K562 (cell line): ENCODE measurements at regions of chr19 and their contacts with region 1.

Region 1: DNA sequence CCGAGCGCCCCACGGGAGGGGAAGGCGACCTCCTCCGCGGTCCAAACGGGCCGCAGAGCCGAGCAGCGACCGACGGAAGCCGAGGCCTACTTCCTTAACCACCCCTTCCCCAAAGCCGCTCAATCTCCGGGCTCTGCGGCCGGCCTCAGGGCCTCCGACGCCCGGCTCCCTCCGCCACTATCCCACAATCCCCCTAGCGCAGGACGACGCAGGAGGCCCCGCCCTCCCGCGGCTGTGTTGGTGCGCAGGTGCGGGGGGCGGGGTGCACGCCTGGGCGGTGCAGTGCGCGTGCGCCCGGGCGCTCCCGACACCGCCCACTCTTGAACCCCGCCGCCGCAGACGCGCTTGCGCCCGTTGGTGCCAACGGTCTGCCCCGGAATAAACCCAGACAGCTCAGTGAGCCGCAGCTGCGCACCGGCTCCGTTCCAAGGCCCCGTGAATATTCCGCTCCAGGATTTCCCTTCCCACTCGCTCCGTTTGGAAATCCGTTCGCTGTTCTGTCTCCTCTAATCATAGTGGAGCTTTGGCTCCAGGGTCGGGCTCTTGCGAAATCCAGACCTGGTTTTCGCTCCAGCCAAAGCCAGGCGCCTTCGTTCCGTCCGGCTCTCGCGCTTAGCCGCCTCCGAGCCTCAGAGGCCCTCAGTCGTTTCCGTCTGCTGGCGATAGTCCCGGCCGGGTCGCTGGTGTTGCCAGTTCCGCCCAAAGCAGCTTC is at the start of gene PPP6R1:
- DNase-seq: peak; percentile 97 to 99 (median 98)
- ATAC-seq: peak; percentile 90
- H3K4me3 ChIP-seq: peak within 1 kb of the TSS; percentile 94
- H3K27ac ChIP-seq: peak within 1 kb of the TSS; percentile 97
- H3K4me1 ChIP-seq: peaks cover 34 to 53% of the 10 kb centered on the region in 2 experiments; a peak in 4 of 5 replicates
- H3K27me3 ChIP-seq: no peaks in the 10 kb centered on the region
- CTCF ChIP-seq: no peak
- EP300 ChIP-seq: peak; percentile 86
- POLR2A ChIP-seq: peak; percentile 92
- RAD21 ChIP-seq: peak; percentile 53 to 57
- polyA plus RNA-seq, gene PPP6R1: 0.48 to 0.89 TPM

Region 2: GRCh38 chr19:54952591-54953344 is 306.2 kb before region 1 on chr19:
- CTCF ChIA-PET with region 1: no interaction called
- POLR2A ChIA-PET with region 1: no interaction called
- in situ Hi-C with region 1: no loop called
- intact Hi-C with region 1: no loop called
- DNase-seq: peak in 1 of 4 experiments; percentile 42
- ATAC-seq: peak; percentile 45; the same call in 2 of the 3 replicates
- H3K4me3 ChIP-seq: no peak overlapping the region
- H3K27ac ChIP-seq: no peak overlapping the region
- H3K4me1 ChIP-seq: peaks cover 8 to 9% of the 10 kb centered on the region in 2 experiments; a peak in 4 of 5 replicates
- H3K27me3 ChIP-seq: peaks cover 6 to 15% of the 10 kb centered on the region in 2 experiments; a peak in 3 of 5 replicates
- CTCF ChIP-seq: no peak
- EP300 ChIP-seq: no peak
- POLR2A ChIP-seq: no peak
- RAD21 ChIP-seq: no peak

Region 3: DNA sequence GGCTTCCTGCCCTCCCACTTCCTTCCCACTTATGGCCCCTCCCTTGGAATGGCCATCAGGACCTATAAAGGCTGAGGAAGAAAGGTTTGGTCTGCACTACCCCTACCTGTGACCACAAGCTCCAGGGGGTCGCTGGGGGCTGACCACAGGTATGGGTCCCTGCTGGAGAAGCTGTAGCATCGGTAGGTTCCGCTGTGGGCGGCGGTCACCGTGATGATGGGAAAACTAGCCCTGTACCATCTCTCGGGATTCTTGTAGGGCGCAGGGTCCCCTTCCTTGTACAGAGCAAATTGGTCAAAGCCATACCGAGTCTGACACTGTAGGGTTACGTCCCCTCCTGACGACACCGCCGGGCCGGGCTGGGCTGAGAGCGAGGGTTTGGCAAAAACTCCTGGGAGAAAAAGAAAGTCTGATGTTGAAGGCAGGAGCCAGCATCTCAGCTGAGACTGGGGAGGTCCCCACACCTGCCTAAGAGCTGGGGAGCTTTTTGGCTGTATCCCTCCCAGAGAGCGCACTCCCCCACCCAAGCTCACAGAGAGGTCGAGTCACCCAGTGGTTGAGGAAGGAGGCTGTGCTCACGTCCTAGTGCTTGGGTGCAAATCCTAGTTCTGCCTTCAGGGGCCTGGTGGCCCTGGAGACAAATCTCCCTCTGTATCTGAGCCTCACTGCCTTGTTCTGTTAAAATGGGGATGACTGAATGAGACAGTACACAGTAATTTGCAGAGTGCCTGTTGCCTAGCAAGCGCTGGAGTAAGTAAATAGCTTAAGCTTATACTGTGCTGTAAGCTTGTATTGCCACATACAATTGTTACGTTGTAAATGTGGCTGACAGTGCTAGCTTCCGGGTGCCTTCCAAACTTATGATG is 231.3 kb before region 1 on chr19:
- CTCF ChIA-PET with region 1: no interaction called
- POLR2A ChIA-PET with region 1: no interaction called
- in situ Hi-C with region 1: no loop called
- intact Hi-C with region 1: no loop called
- DNase-seq: peak; percentile 61 to 79 (median 64)
- ATAC-seq: peak; percentile 88
- H3K4me3 ChIP-seq: peak overlapping the region; percentile 51
- H3K27ac ChIP-seq: peak overlapping the region; percentile 79
- H3K4me1 ChIP-seq: peaks cover 2 to 19% of the 10 kb centered on the region in 2 experiments; a peak in 3 of 5 replicates
- H3K27me3 ChIP-seq: no peaks in the 10 kb centered on the region
- CTCF ChIP-seq: peak; percentile 38 to 59 (median 51)
- EP300 ChIP-seq: no peak
- POLR2A ChIP-seq: peak; percentile 93
- RAD21 ChIP-seq: peak in 1 of 2 experiments; percentile 6; a peak in 1 of 4 replicates

Region 4: DNA sequence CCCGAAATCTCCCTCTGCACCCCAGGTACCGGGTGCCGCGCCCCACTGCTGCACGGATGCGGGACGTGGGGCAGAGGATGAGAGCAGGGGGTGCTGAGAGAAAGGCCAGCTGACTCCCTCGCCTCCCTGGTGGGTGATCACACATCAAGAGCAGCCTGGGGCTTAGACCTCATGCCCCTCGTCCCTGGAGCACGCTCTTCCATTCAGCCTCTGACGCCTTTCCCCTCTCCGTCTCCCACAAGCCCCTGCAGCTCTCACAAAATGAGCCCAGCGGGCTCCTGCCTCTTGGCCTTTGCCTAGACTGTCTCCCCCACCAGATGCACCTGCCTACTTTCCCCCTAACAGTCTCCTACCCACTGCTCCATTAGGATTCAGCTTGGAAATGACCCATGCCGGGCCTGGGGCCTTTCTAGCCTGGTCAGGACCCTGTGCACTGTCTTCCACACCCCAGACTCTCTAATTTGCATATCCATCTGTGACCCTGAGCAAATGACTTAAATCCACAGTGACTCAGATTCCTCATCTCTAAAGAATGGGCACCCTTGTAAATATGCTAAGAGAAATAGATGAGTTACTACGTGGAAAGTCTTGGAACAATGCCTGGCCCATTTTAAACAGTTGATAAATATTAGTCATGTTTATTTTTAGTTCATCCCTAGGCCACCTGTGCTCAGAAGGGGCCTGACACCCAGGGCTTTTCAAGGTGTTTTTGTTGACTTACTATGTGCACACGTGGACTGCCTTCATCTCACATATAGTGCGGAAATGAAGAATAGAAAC is 49.1 kb before region 1 on chr19:
- CTCF ChIA-PET with region 1: no interaction called
- POLR2A ChIA-PET with region 1: no interaction called
- in situ Hi-C with region 1: no loop called
- intact Hi-C with region 1: no loop called
- DNase-seq: peak in 2 of 4 experiments; percentile 8 to 35
- ATAC-seq: no peak
- H3K4me3 ChIP-seq: no peak overlapping the region
- H3K27ac ChIP-seq: 0 out of 3 replicates have a peak overlapping the region, but pooled peaks have one; percentile 9
- H3K4me1 ChIP-seq: peaks cover 29 to 30% of the 10 kb centered on the region in 2 experiments
- H3K27me3 ChIP-seq: no peaks in the 10 kb centered on the region
- CTCF ChIP-seq: no peak
- EP300 ChIP-seq: no peak
- POLR2A ChIP-seq: no peak
- RAD21 ChIP-seq: no peak

Region 5: DNA sequence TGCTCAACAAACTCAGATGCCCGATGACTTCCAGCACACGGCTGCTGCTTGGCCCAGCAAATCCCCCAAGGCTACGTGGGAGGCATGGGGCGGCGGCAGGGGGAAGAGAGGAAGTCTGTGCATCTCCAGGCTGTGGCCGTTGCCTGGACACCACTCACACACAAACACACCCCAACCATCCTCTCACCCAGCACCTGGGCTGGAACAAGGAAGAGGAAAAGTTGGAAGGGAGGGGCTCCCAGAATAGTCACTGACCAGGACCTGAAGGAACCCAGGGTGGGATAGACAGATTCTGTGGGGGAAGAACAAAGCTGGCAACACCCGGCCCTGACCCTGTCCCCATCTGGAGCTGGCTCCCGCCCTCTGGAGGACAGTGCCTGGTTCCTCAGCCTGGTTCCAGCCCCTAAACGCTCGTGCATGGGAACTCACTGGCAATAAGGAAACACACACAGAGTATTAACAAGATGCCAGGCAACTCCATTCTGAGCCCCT is 11.3 kb before region 1 on chr19:
- CTCF ChIA-PET with region 1: no interaction called
- POLR2A ChIA-PET with region 1: interaction called, 26 read pairs
- in situ Hi-C with region 1: no loop called
- intact Hi-C with region 1: no loop called
- DNase-seq: peak in 1 of 4 experiments; percentile 21
- ATAC-seq: peak; percentile 25; the same call in 2 of the 3 replicates
- H3K4me3 ChIP-seq: no peak overlapping the region
- H3K27ac ChIP-seq: no peak overlapping the region
- H3K4me1 ChIP-seq: peaks cover 7 to 35% of the 10 kb centered on the region in 2 experiments; a peak in 4 of 5 replicates
- H3K27me3 ChIP-seq: no peaks in the 10 kb centered on the region; a peak in 1 of 5 replicates
- CTCF ChIP-seq: no peak
- EP300 ChIP-seq: no peak
- POLR2A ChIP-seq: no peak
- RAD21 ChIP-seq: no peak

Region 6: GRCh38 chr19:55270172-55270942 is 11.4 kb after region 1 on chr19:
- CTCF ChIA-PET with region 1: no interaction called
- POLR2A ChIA-PET with region 1: interaction called, 18 read pairs
- in situ Hi-C with region 1: no loop called
- intact Hi-C with region 1: no loop called
- DNase-seq: peak in 2 of 4 experiments; percentile 56 to 64
- ATAC-seq: peak; percentile 94
- H3K4me3 ChIP-seq: no peak overlapping the region
- H3K27ac ChIP-seq: peak overlapping the region; percentile 23; the same call in 1 of the 3 replicates
- H3K4me1 ChIP-seq: peaks cover 10 to 20% of the 10 kb centered on the region in 2 experiments; a peak in 4 of 5 replicates
- H3K27me3 ChIP-seq: no peaks in the 10 kb centered on the region
- CTCF ChIP-seq: no peak
- EP300 ChIP-seq: peak; percentile 70
- POLR2A ChIP-seq: no peak
- RAD21 ChIP-seq: peak in 1 of 2 experiments; percentile 53; a peak in 2 of 4 replicates

Region 7: DNA sequence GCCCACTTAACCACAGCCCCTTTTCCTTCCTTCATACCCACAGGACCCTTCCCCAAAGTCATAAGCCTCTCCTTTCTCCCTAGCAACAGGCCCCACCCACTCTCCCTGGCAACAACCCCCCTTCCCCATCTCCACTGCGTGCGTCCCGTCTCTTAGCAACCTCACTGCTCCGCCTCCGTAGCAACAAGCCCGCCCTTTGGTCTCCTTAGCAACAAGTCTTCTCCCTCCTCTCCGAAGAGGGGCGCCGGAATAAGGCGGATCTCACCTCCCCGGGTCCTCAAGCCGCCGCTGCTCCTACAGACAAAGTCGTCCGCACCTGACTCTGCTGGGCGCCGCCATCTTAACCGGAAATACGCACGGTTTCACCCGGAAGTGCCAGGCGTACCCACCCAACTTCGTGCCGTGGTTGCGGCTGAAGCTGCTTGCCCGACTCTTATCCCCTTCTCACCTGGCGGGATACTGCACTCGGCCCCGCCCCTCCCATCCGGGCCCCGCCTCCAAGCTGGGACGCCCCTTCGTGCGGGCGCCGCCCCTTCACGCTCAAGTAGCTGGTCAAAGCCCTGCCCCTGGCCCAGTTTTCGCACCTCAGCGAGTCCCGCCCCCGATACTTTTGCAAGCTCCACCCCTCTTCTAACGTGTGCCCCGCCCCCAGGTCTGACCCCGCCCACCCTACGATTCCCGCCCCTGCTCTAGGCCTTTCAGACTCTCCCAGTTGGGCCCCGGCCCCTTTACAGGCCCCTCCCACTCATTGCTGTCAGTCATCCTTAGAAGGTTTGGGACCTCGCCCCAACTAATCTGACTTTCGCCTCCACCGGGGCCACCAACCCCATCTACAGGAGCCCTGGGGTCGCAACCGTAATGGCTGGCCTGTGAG is 21.0 kb after region 1 on chr19 and contains the start of gene HSPBP1:
- CTCF ChIA-PET with region 1: no interaction called
- POLR2A ChIA-PET with region 1: interaction called, 15 read pairs
- in situ Hi-C with region 1: no loop called
- intact Hi-C with region 1: loop called (anchors 2 kb)
- DNase-seq: peak; percentile 91 to 97 (median 94)
- ATAC-seq: peak; percentile 92
- H3K4me3 ChIP-seq: peak within 1 kb of the TSS; percentile 65
- H3K27ac ChIP-seq: peak within 1 kb of the TSS; percentile 79
- H3K4me1 ChIP-seq: peaks cover 19 to 28% of the 10 kb centered on the region in 2 experiments
- H3K27me3 ChIP-seq: no peaks in the 10 kb centered on the region
- CTCF ChIP-seq: 0 out of 6 replicates have a peak, but pooled peaks of 1 of the 3 experiments have one; percentile 1
- EP300 ChIP-seq: no peak
- POLR2A ChIP-seq: peak; percentile 76
- RAD21 ChIP-seq: no peak
- polyA plus RNA-seq, gene HSPBP1: 0.83 to 1.5 TPM

Region 8: DNA sequence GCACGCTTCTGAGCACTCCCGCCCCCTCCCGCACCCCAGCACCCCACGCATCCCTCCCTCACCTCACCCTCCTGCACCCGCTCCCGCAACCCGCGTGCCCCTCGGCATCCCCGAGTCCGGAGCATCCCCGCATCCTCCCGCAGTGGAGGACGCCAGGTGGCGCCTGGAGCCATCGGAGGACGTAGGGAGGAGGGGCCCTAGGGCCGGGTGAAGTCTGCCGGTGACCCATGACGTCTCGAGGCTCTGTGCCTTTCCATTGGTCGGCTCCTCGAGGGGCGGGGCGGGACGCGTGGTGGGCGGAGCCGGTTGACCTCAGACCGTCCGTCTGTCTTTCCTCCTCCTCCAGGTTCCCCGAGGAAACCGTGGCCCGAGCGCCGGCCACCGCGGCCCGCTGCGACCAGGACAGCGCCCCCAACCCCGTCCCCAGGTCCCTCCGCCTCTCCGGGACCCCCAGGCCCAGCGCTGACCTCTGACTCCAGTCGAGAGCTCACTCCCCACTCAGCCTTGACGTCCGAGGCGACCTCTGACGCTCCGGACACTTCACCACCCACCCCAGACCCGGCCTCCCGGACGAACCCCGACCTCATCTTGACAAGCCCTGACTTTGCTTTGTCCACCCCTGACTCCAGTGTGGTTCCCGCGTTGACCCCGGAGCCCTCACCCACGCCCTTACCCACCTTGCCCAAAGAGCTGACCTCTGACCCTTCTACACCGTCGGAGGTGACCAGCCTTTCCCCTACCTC is 258.1 kb after region 1 on chr19:
- CTCF ChIA-PET with region 1: no interaction called
- POLR2A ChIA-PET with region 1: no interaction called
- in situ Hi-C with region 1: no loop called
- intact Hi-C with region 1: no loop called
- DNase-seq: peak; percentile 95 to 100 (median 100)
- ATAC-seq: peak; percentile 100
- H3K4me3 ChIP-seq: peak overlapping the region; percentile 42
- H3K27ac ChIP-seq: peak overlapping the region; percentile 76
- H3K4me1 ChIP-seq: peaks cover 3 to 22% of the 10 kb centered on the region in 2 experiments; a peak in 3 of 5 replicates
- H3K27me3 ChIP-seq: peaks cover 3 to 16% of the 10 kb centered on the region in 2 experiments; a peak in 3 of 5 replicates
- CTCF ChIP-seq: peak; percentile 90 to 96 (median 96)
- EP300 ChIP-seq: no peak
- POLR2A ChIP-seq: 0 out of 2 replicates have a peak, but pooled peaks have one; percentile 49
- RAD21 ChIP-seq: peak; percentile 98 to 99